ENCODE measurements at regions of chrX and their contacts with region 1.

Region 1: GRCh38 chrX:123422877-123423276 is 238.8 kb downstream of the GRIA3 start:
- DNase-seq: no peak
- H3K4me3 ChIP-seq: no peak overlapping the region
- CTCF ChIP-seq: peak; percentile 67

Region 2: DNA sequence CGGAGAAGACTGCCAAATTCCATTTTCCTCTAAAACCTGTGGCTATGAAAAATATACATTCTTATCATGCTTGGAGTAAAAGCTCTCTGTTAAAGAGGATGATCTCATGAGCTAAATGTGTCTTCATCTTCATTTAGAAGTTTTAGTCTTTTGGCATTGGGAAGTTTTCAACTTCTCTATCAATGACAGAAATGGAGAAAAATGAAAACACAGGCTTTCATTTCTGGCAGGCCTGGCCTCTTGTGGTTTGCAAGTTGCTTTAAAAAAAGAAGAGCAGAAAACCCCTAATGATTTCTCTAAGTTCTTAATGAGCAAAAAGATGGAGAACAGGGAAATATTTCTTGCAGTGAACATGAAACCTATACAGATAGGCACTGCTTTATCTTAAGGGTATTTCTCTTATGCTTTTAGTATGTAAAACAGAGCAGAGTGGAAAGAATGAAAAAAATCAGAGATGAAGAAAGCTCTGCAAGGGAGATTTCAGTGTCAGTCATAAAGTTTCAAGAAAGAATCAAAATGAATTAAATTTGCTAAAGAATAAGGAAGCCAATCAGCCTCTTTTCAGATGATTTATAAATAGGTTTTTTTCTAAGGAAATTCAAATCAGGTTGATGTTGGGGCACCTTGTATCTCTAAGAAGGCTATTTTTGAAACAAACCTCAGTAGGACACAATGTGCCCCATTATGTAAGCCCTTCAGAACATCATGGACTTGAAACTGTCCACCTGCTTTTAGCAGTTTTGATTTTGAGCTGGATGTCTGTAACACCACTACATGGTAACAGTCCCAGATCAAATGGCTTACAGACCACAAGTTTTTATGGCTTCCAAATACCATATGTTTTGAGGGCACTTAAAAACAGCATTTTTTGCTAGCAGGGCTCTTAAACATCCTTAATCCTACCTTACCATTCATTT is 13.8 kb before region 1 on chrX:
- CTCF ChIA-PET with region 1: interaction called, 15 read pairs
- POLR2A ChIA-PET with region 1: interaction called, 4 read pairs
- DNase-seq: peak; percentile 63
- H3K4me3 ChIP-seq: no peak overlapping the region
- CTCF ChIP-seq: no peak